ENCODE measurements at regions of chr11 and their contacts with region 1.

Region 1: GRCh38 chr11:5476184-5476819 is 12.2 kb upstream of the OR52D1 start:
- DNase-seq: peak; percentile 7
- H3K4me3 ChIP-seq: no peak overlapping the region
- H3K27ac ChIP-seq: no peak overlapping the region
- H3K27me3 ChIP-seq: no peaks in the 10 kb centered on the region
- CTCF ChIP-seq: peak; percentile 90

Region 2: DNA sequence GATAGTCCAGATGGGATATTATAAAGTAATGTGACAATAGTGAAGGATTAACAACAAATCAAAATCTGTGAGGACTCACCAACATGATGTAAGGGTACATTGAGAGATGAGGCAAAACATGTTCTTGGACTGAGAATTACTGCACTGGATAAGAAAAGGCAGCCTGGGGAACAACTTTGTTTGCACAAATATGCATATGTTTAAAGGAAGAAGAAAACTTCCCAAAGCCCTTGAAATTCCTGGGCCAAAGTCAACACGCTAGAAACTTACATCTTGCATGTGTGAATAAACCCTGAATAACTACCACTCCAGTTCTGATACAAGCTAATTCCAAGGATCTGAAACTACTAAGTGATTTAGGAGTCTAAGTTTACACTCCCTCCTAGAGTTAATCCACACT is 339.3 kb before region 1 on chr11:
- CTCF ChIA-PET with region 1: no interaction called
- POLR2A ChIA-PET with region 1: no interaction called
- DNase-seq: no peak
- H3K4me3 ChIP-seq: no peak overlapping the region
- H3K27ac ChIP-seq: no peak overlapping the region
- H3K27me3 ChIP-seq: no peaks in the 10 kb centered on the region
- CTCF ChIP-seq: no peak

Region 3: DNA sequence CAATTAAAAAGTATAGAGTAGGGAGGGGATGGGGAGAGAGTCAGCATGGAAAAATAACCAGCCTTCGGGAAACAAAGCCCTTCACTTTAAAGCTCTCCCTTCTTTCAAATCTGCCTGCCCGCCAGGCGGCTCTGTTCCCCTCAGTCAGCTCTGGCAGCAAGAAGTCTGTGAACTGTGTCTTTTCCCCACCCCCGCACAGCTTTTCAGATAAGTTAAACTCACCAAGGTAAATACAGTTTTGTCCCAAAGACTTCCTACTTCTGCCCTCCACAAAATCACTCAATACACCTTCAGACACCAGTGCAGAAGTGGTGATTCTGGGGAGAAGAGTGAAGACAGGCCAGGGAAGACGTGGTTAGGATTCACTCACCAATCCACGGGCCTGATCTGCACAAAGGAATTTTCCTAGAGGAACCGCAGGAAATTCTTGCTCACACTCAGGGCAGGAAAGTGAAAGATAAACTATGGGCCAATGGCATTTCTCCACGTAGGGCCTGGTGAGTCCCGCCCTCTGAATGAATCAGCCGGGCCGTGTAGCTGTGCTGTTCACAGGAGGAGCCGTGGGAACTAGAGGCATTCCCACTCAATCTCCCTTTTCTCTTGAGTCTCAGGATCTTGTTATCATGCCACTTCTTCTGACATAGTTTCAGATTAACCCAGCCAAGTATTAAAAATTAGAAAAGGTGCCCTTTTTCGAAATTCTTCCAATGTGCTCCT is 208.5 kb after region 1 on chr11 and contains the start of gene TRIM5:
- CTCF ChIA-PET with region 1: interaction called, 11 read pairs
- POLR2A ChIA-PET with region 1: no interaction called
- DNase-seq: peak; percentile 95
- H3K4me3 ChIP-seq: peak within 1 kb of the TSS; percentile 62
- H3K27ac ChIP-seq: peak within 1 kb of the TSS; percentile 100
- H3K27me3 ChIP-seq: no peaks in the 10 kb centered on the region
- CTCF ChIP-seq: peak; percentile 72
- polyA plus RNA-seq, gene TRIM5: 46.3 and 53.3 TPM in 2 replicates

Region 4: GRCh38 chr11:5808500-5809121 is 332.3 kb after region 1 on chr11 and contains the start of gene OR52N2:
- CTCF ChIA-PET with region 1: interaction called, 35 read pairs
- POLR2A ChIA-PET with region 1: no interaction called
- DNase-seq: peak; percentile 43
- H3K4me3 ChIP-seq: peak within 1 kb of the TSS; percentile 64
- H3K27ac ChIP-seq: no peak within 1 kb of the TSS
- H3K27me3 ChIP-seq: peaks cover 5% of the 10 kb centered on the region
- CTCF ChIP-seq: peak; percentile 91
- polyA plus RNA-seq, gene OR52N2: not detected in 2 replicates

Region 5: GRCh38 chr11:5891216-5891800 is 415.0 kb after region 1 on chr11:
- CTCF ChIA-PET with region 1: interaction called, 13 read pairs
- POLR2A ChIA-PET with region 1: no interaction called
- DNase-seq: no peak
- H3K4me3 ChIP-seq: no peak overlapping the region
- H3K27ac ChIP-seq: no peak overlapping the region
- H3K27me3 ChIP-seq: no peaks in the 10 kb centered on the region
- CTCF ChIP-seq: peak; percentile 52